K562 (cell line): ENCODE measurements at regions of chr18 and their contacts with region 1.

Region 1: GRCh38 chr18:37476182-37476581 is 89.4 kb downstream of the CELF4 start:
- DNase-seq: peak; percentile 65 to 77 (median 74)
- ATAC-seq: peak; percentile 87
- H3K4me3 ChIP-seq: no peak overlapping the region
- H3K27ac ChIP-seq: no peak overlapping the region
- H3K4me1 ChIP-seq: no peaks in the 10 kb centered on the region
- H3K27me3 ChIP-seq: no peaks in the 10 kb centered on the region
- CTCF ChIP-seq: peak; percentile 81 to 88 (median 82)
- EP300 ChIP-seq: no peak
- POLR2A ChIP-seq: no peak
- RAD21 ChIP-seq: peak; percentile 47 to 69

Region 2: DNA sequence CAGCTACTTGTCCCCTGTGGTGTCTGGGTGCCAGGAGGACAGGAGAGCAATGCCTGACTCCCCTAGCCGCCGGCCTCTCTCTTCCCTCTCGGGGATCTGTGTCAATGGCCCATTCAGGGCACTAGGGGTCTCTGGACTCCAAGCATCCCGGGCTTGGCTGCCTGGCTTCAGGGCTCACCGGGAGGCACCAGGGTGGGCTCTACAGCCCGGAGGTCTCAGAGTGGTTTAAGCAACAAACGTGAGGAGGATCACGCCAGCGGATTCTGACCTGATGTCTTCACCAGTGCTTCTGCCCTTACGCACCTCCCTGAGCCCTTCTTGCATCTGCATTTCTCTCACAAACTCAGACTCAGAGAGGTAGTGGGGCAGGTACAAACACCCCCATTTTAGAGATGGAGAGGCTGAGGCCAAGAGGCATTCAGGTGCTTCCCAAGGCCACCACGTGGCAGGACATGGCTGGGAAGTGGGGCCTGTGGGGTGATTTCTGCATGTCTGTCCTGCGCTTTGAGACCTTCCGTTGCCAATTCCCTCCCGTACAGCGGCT is 153.6 kb before region 1 on chr18:
- CTCF ChIA-PET with region 1: no interaction called
- POLR2A ChIA-PET with region 1: no interaction called
- in situ Hi-C with region 1: no loop called
- intact Hi-C with region 1: loop called (anchors 5 kb)
- DNase-seq: peak; percentile 68 to 78 (median 74)
- ATAC-seq: peak; percentile 91
- H3K4me3 ChIP-seq: no peak overlapping the region
- H3K27ac ChIP-seq: no peak overlapping the region
- H3K4me1 ChIP-seq: peaks cover 0 to 8% of the 10 kb centered on the region in 2 experiments; a peak in 1 of 5 replicates
- H3K27me3 ChIP-seq: peaks cover 0 to 44% of the 10 kb centered on the region in 2 experiments; a peak in 3 of 5 replicates
- CTCF ChIP-seq: peak; percentile 77 to 94 (median 85)
- EP300 ChIP-seq: no peak
- POLR2A ChIP-seq: no peak
- RAD21 ChIP-seq: peak; percentile 43 to 68

Region 3: DNA sequence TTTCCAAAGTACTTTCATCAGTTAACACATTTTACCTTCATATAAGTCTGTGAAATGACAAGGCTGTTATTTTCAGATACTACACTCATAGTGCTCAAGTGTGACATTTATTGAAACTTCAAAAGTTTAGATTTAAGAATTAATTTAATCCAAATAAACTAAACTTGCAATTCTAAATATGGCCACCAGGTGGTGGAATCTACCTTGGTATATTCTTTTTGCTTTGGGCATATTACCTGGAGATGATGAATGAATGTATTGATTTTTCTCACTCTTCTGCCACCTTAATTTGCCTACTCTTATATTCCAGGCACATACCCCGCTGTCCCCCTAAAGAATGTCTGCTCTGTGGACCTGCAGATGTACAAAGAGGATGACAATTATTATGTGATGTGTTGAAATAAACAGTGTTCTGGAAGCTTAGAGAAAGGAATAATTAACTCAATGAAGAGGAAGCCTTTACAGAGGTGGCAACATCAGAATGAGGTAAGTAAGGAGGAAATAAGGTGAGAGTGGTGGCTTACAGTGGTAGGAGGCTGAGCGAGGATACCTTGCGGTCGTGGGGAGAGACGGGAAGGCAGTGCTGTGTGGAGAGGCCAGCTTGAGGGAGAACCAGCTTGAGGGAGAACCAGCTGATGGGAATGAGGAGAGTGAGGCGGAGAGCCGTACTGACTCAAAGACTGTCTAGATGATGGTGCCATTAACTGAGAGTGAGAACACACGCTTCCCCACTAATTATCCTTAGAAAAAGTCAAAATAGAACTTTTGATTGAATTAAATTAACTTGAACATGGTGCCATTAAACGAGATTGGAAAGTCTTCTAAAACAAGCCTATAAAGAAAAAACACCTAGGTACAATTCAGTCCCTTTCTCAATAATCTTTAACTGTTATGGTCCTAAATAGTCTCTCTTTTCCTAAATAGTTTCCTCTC is 90.1 kb before region 1 on chr18:
- CTCF ChIA-PET with region 1: interaction called, 5 read pairs
- POLR2A ChIA-PET with region 1: no interaction called
- in situ Hi-C with region 1: no loop called
- intact Hi-C with region 1: loop called (anchors 5 kb)
- DNase-seq: peak; percentile 28 to 58 (median 37)
- ATAC-seq: no peak
- H3K4me3 ChIP-seq: no peak overlapping the region
- H3K27ac ChIP-seq: no peak overlapping the region
- H3K4me1 ChIP-seq: no peaks in the 10 kb centered on the region
- H3K27me3 ChIP-seq: no peaks in the 10 kb centered on the region; a peak in 1 of 5 replicates
- CTCF ChIP-seq: peak; percentile 49 to 82 (median 60); a peak in 4 of 6 replicates
- EP300 ChIP-seq: no peak
- POLR2A ChIP-seq: no peak
- RAD21 ChIP-seq: peak; percentile 73 to 86

Region 4: DNA sequence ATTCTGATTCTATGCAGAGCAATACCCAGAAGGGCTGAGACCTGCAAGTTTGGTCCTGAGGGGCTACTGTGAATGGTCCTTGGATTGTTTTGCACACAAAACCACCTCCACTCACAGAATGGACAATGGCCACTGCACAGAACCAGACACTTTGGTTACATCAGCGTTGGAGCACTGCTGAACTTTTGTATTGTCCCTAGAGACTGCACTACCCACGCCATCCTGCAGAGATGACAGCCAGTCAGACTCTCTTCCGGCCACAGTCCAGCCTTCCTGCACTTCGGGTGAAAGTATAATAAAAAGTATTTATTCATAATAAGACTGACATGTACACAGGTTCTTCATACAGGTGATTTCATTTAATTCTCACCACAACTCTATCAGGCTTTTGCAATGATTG is 53.7 kb after region 1 on chr18:
- CTCF ChIA-PET with region 1: no interaction called
- POLR2A ChIA-PET with region 1: no interaction called
- in situ Hi-C with region 1: no loop called
- intact Hi-C with region 1: no loop called
- DNase-seq: no peak
- ATAC-seq: peak; percentile 48; the same call in 2 of the 3 replicates
- H3K4me3 ChIP-seq: no peak overlapping the region
- H3K27ac ChIP-seq: no peak overlapping the region
- H3K4me1 ChIP-seq: no peaks in the 10 kb centered on the region
- H3K27me3 ChIP-seq: peaks cover 2 to 17% of the 10 kb centered on the region in 2 experiments; a peak in 3 of 5 replicates
- CTCF ChIP-seq: no peak
- EP300 ChIP-seq: no peak
- POLR2A ChIP-seq: no peak
- RAD21 ChIP-seq: no peak